Prostate gland (tissue), 2 donors: ENCODE measurements at regions of chr11 and their contacts with region 1.

Region 1: GRCh38 chr11:28697920-28698827 is 590.0 kb downstream of the METTL15 start:
- DNase-seq: peak; percentile 19
- H3K4me3 ChIP-seq: no peak overlapping the region
- H3K27ac ChIP-seq: no peak overlapping the region
- H3K4me1 ChIP-seq: no peaks in the 10 kb centered on the region
- H3K27me3 ChIP-seq: no peaks in the 10 kb centered on the region
- CTCF ChIP-seq: peak; percentile 49 to 73 (median 58)
- POLR2A ChIP-seq: no peak

Region 2: DNA sequence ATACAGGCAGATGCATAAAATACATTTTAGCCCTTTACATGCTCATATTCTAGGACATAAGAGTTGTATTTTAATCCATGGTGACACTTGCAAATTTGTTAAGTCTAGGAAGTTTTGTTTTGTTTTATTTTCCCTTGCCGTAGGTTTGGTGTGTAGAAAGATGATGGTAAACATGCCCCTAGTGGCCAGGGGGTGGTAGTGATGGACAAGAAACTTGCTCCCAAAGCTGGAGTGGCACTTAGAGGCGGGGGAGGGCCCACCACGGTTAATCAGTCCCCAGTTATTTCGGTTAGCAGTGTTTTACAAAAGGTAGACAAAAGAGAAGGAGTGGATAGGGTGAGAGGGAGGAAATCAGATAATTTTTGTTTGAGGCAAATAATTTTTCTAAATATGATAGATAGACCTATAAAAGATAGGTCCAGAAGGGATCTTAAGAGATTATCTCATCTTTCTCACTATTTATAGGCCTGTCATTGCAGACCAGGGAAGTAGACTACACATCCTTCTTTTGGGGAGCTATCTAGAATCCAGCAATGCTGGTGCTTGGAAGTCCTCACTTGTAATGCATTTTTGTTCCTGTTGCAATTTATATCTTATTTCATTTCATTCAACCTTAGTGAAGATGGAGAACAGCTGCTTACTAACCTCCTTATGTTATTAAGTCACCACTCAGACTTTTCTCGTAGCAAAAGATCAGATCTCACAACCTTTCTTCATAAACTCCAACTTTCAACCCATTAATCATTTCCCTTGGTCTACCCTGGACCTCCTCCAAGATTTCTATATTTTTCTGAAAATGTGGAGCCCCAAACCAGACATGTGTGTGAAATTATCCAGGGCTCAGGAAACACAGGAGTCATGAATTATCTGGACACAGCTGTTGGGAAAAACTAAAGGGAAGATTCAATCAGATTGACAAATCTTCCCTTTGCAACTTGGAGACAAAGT is 992.0 kb before region 1 on chr11:
- intact Hi-C with region 1: loop called (anchors 10 kb)
- DNase-seq: no peak
- H3K4me3 ChIP-seq: no peak overlapping the region
- H3K27ac ChIP-seq: no peak overlapping the region
- H3K4me1 ChIP-seq: no peaks in the 10 kb centered on the region
- H3K27me3 ChIP-seq: no peaks in the 10 kb centered on the region
- CTCF ChIP-seq: peak in 3 of 4 experiments; percentile 14 to 35 (median 33)
- POLR2A ChIP-seq: no peak

Region 3: DNA sequence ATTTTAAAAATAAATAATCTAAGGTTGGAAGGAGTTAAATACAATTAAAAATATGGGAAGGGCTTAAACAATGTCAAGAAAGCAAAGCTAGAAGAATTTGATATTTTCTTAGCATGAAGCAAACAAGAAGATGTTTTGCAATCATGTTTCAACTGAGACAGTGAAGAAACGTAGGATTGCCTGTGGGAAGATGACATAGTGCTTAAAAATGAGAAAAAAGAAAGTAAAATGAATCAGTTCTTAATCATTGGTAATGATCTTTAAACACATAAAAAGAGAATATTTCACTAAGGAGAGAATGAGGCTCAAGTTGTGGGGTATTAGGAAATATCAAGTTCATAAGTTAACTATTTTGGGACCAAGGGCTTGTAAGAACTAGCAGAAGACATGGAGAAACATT is 265.0 kb after region 1 on chr11:
- intact Hi-C with region 1: no loop called
- DNase-seq: no peak
- H3K4me3 ChIP-seq: no peak overlapping the region
- H3K27ac ChIP-seq: no peak overlapping the region
- H3K4me1 ChIP-seq: no peaks in the 10 kb centered on the region
- H3K27me3 ChIP-seq: no peaks in the 10 kb centered on the region
- CTCF ChIP-seq: no peak
- POLR2A ChIP-seq: no peak